Heart right ventricle (tissue), 16 donors: ENCODE measurements at regions of chr9 and their contacts with region 1.

Region 1: DNA sequence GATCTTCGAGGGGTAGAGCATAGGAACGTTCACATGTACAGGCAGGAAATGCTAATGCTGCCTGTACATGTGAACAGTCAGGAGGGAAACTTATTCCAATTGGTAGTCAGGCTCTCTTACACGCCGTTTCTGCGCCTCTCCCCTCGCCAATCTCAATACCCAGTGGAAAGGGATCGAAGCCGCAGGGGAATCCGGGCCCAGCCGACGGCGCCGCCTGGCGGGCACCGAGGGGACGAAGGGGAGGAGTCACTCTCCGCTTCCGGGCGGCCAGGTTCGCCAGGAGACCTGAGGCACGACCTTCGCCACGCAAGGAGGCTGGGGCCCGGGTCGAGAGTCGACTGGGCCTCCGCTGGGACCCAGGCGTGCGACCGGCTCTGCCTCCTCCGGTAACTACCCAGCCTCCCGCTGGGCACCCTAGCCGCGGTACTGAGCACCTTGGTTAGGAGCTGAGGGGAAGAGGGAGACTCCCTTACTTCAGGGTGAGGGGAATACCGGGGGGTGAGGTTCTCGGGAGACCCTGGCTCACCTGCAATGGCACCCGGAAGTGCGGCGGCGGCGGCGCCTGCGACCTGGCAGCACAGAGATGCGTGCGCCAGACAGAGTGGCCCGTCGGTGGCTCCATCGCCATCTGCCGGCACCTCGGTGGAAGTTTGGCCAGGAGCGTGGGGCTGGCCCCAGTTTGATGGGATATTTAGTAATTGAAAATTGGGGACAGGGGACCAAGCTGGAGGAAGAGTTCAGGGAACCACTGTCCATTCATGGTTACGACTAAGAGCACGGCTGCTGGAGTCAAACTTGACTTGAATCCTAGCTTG is at the start of gene PIGO:
- DNase-seq: peak; percentile 85 to 89
- ATAC-seq: peak; percentile 91 to 98 (median 96)
- H3K4me3 ChIP-seq: peak within 1 kb of the TSS; percentile 36 to 98 (median 84)
- H3K27ac ChIP-seq: peak within 1 kb of the TSS; percentile 70 to 99 (median 96)
- H3K4me1 ChIP-seq: peaks cover 0 to 18% (median 8%) of the 10 kb centered on the region in 9 donors
- H3K27me3 ChIP-seq: no peaks in the 10 kb centered on the region
- CTCF ChIP-seq: peak; percentile 63 to 81 (median 73)
- total RNA-seq, gene PIGO: 8.2 to 12.3 (median 9.9) TPM

Region 2: GRCh38 chr9:34989003-34989945 is 107.0 kb before region 1 on chr9 and contains the start of gene DNAJB5:
- intact Hi-C with region 1: loop called in 2 of 10 experiments (anchors 10 kb)
- DNase-seq: peak; percentile 97 to 100
- ATAC-seq: peak; percentile 80 to 90 (median 84)
- H3K4me3 ChIP-seq: peak within 1 kb of the TSS; percentile 37 to 91 (median 77)
- H3K27ac ChIP-seq: peak within 1 kb of the TSS; percentile 72 to 99 (median 94)
- H3K4me1 ChIP-seq: peaks cover 19 to 62% (median 49%) of the 10 kb centered on the region in 9 donors
- H3K27me3 ChIP-seq: no peaks in the 10 kb centered on the region
- CTCF ChIP-seq: no peak
- total RNA-seq, gene DNAJB5: 49.0 to 206 (median 85.1) TPM